MCF 10A (cell line): ENCODE measurements at regions of chr17 and their contacts with region 1.

Region 1: DNA sequence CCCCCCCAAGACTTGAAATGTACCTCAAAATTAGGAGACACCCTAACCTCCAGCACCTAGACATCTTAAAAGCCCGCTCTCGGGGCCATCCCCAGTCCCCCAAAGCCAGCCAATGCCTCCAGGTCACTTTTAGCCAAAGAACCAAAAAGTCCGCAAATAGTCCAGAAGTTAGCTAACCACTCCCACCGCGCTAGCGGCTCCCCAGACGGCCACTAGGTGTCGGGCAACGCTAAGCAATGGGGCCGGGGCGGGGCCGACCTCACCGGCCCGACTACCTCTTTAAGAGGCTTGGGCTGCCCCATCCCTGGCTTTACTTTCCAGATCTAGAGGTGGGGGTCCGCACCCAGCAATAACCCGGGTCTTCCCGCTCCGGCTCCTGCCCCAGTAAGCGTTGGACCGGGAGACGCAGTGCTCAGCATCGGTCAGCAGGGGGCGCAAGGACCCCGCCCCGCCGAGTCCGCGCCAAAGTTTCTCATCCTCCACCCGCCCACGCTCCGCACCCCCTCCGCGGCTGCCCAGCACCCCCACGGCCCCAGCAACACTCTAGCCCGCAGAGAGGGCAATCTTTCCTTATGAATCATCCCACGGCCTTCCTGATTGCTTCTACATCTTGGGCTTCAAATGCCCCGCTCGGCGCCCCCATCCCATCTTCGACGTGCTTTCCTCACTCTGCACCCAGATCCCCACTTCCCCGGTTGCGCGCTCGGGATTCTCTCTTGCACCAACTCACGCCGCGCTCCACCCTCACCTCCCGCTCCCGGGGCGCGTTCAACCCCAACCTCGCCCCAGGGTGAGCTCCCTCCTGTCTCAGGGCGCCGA is 765 bp downstream of the COL1A1 start:
- DNase-seq: peak; percentile 90
- H3K4me3 Mint-ChIP-seq: peak overlapping the region; percentile 78
- H3K27ac Mint-ChIP-seq: peak overlapping the region; percentile 64
- H3K4me1 Mint-ChIP-seq: peaks cover 20% of the 10 kb centered on the region
- H3K27me3 Mint-ChIP-seq: peaks cover 9% of the 10 kb centered on the region
- CTCF ChIP-seq: peak; percentile 99

Region 2: DNA sequence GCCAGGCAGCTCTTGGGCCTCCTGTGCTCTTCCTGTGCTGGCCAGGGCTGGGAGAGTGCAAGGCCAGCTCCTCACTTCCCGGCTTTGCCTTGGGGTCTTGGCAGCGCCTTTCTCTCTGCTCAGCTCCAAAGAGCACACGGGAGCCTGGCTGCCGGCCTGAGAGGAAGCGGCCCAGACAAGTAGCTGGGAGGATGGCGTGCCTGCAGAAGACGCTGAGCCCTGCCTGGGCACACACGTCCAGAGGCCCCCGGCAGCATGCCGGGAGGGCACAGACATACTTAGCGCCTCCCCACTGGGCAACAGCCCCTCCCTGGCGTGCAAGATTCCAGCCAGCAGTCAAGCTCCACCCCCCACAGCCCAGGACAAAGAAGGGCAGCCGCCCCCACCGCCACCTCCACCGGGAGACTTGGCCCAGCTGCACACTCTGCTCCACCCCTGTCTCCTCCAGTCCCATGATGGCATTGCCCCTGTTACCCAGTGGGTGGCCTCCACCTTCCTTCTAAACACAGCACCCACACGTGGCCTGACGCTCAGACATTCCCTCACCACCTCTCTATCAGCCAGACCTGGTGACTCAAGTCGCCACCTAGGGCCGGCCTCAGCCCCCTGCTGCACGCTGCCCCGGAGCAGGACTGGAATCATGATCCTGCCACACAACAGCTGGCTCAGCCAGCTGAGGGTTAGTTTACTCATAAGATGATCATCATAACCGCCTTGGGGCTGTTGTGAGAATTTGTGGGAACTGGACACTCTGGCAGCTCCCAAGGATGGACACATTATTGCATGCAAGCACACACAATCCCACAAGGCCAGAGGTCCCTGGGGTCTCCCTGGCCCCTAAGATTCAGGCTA is 22.5 kb before region 1 on chr17:
- CTCF ChIA-PET with region 1: interaction called, 29 read pairs
- POLR2A ChIA-PET with region 1: interaction called, 11 read pairs
- intact Hi-C with region 1: no loop called
- DNase-seq: peak; percentile 98
- H3K4me3 Mint-ChIP-seq: peak overlapping the region; percentile 15
- H3K27ac Mint-ChIP-seq: peak overlapping the region; percentile 52
- H3K4me1 Mint-ChIP-seq: peaks cover 42% of the 10 kb centered on the region
- H3K27me3 Mint-ChIP-seq: no peaks in the 10 kb centered on the region
- CTCF ChIP-seq: peak; percentile 33

Region 3: GRCh38 chr17:50221864-50222545 is 21.3 kb after region 1 on chr17:
- CTCF ChIA-PET with region 1: interaction called, 43 read pairs
- POLR2A ChIA-PET with region 1: interaction called, 10 read pairs
- intact Hi-C with region 1: no loop called
- DNase-seq: peak; percentile 93
- H3K4me3 Mint-ChIP-seq: no peak overlapping the region
- H3K27ac Mint-ChIP-seq: peak overlapping the region; percentile 73
- H3K4me1 Mint-ChIP-seq: peaks cover 44% of the 10 kb centered on the region
- H3K27me3 Mint-ChIP-seq: no peaks in the 10 kb centered on the region
- CTCF ChIP-seq: no peak

Region 4: GRCh38 chr17:50289991-50290702 is 89.5 kb after region 1 on chr17:
- CTCF ChIA-PET with region 1: interaction called, 198 read pairs
- POLR2A ChIA-PET with region 1: interaction called, 11 read pairs
- intact Hi-C with region 1: no loop called
- DNase-seq: peak; percentile 98
- H3K4me3 Mint-ChIP-seq: peak overlapping the region; percentile 72
- H3K27ac Mint-ChIP-seq: peak overlapping the region; percentile 89
- H3K4me1 Mint-ChIP-seq: peaks cover 28% of the 10 kb centered on the region
- H3K27me3 Mint-ChIP-seq: no peaks in the 10 kb centered on the region
- CTCF ChIP-seq: no peak